Posterior cingulate gyrus (tissue), 11 donors: ENCODE measurements at regions of chr19 and their contacts with region 1.

Region 1: GRCh38 chr19:18058208-18059030 is 28.3 kb downstream of the IL12RB1 start:
- DNase-seq: peak; percentile 70 to 98 (median 84)

Region 2: DNA sequence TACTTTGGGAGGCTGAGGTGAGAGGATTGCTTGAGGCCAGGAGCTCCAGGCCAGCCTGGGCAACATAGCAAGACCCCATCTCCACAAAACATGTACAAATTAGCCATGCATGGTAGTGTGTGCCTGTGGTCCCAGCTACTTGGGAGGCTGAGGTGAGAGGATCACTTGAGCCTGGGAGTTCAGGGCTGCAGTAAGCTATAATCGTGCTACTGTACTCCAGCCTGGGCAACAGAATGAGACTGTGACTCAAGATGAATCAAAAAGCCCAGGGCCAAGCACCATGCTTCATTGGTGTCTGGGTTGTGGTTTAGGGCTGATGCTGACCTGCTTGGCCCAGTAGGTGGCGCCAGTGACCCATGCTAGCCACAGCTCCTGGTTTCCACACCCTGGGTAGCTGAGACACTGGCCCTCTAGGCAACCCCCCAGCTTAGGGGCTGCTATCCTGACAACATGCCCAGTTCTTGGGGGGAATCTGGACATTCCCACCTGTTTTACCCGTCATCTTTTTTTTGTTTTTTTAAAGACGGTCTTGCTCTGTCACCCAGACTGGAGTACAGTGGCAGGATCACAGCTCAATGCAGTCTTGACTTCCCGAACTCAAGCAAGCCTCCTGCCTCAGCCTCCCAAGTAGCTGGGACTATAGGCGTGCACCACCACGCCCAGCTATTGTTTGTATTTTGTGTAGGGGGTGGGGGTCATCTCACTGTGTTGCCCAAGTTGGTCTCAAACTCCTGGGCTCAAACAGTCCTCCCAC is 120.2 kb before region 1 on chr19:
- intact Hi-C with region 1: loop called (anchors 5 kb)
- DNase-seq: peak; percentile 65 to 96 (median 84)

Region 3: GRCh38 chr19:18007044-18007916 is 51.1 kb before region 1 on chr19:
- intact Hi-C with region 1: loop called (anchors 1 kb)
- DNase-seq: peak; percentile 68 to 98 (median 86)

Region 4: DNA sequence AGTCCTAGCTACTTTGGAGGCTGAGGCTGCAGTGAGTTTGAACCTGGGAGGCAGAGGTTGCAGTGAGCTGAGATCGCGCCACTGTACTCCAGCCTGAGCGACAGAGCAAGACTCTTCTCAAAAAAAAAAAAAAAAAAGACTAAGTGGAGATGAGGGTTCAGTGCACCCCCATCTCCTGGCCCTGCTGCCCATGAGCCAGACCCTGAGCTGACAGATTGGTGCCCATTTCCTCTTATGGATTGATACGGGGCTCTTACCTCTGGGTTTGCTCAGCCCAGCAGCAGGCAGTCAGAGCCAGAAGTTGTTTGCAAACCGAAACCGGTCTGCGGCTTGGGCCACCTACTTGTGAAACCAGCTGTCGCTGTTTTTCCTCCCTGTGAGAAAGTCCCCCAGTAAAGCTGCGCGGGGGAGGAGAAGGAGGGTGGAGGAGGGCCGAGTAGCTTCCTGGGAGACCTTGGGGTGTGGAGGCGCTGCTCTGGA is 13.6 kb before region 1 on chr19:
- intact Hi-C with region 1: no loop called
- DNase-seq: peak; percentile 35 to 95 (median 64)